CD8-positive, alpha-beta T cell (primary cell): ENCODE measurements at regions of chr2 and their contacts with region 1.

Region 1: GRCh38 chr2:98771721-98772524 is 41.0 kb upstream of the MGAT4A start:
- DNase-seq: peak; percentile 36 to 93 (median 68)
- ATAC-seq: peak; percentile 68
- H3K4me3 ChIP-seq: peak overlapping the region; percentile 39 to 50
- H3K4me3 Mint-ChIP-seq: peak overlapping the region; percentile 87
- H3K27ac ChIP-seq: peak overlapping the region; percentile 79 to 89
- H3K27ac Mint-ChIP-seq: peak overlapping the region; percentile 98
- H3K4me1 ChIP-seq: peaks cover 67% of the 10 kb centered on the region
- H3K4me1 Mint-ChIP-seq: peaks cover 77% of the 10 kb centered on the region
- H3K27me3 ChIP-seq: no peaks in the 10 kb centered on the region
- H3K27me3 Mint-ChIP-seq: no peaks in the 10 kb centered on the region
- CTCF ChIP-seq: no peak

Region 2: GRCh38 chr2:98654699-98655495 is 117.0 kb before region 1 on chr2:
- CTCF ChIA-PET with region 1: interaction called, 12 read pairs
- POLR2A ChIA-PET with region 1: interaction called, 56 read pairs
- intact Hi-C with region 1: loop called in 1 of 2 experiments (anchors 2 kb)
- DNase-seq: peak in 5 of 9 experiments; percentile 43 to 90 (median 75)
- ATAC-seq: peak; percentile 51
- H3K4me3 ChIP-seq: no peak overlapping the region
- H3K4me3 Mint-ChIP-seq: peak overlapping the region; percentile 69
- H3K27ac ChIP-seq: peak overlapping the region; percentile 77 to 80
- H3K27ac Mint-ChIP-seq: peak overlapping the region; percentile 99
- H3K4me1 ChIP-seq: peaks cover 92% of the 10 kb centered on the region
- H3K4me1 Mint-ChIP-seq: peaks cover 84% of the 10 kb centered on the region
- H3K27me3 ChIP-seq: no peaks in the 10 kb centered on the region
- H3K27me3 Mint-ChIP-seq: no peaks in the 10 kb centered on the region
- CTCF ChIP-seq: no peak

Region 3: GRCh38 chr2:98736464-98736889 is 35.4 kb before region 1 on chr2:
- CTCF ChIA-PET with region 1: interaction called, 17 read pairs
- POLR2A ChIA-PET with region 1: interaction called, 112 read pairs
- intact Hi-C with region 1: loop called (anchors 1 kb)
- DNase-seq: peak in 2 of 9 experiments; percentile 32 to 49
- ATAC-seq: peak; percentile 58
- H3K4me3 ChIP-seq: no peak overlapping the region
- H3K4me3 Mint-ChIP-seq: peak overlapping the region; percentile 22
- H3K27ac ChIP-seq: peak overlapping the region in 1 of 2 experiments; percentile 39
- H3K27ac Mint-ChIP-seq: peak overlapping the region; percentile 82
- H3K4me1 ChIP-seq: peaks cover 63% of the 10 kb centered on the region
- H3K4me1 Mint-ChIP-seq: peaks cover 76% of the 10 kb centered on the region
- H3K27me3 ChIP-seq: no peaks in the 10 kb centered on the region
- H3K27me3 Mint-ChIP-seq: no peaks in the 10 kb centered on the region
- CTCF ChIP-seq: no peak

Region 4: GRCh38 chr2:98757904-98758421 is 14.0 kb before region 1 on chr2:
- CTCF ChIA-PET with region 1: interaction called, 5 read pairs
- POLR2A ChIA-PET with region 1: interaction called, 52 read pairs
- intact Hi-C with region 1: loop called in 1 of 2 experiments (anchors 1 kb)
- DNase-seq: peak in 8 of 9 experiments; percentile 22 to 87 (median 70)
- ATAC-seq: peak; percentile 69
- H3K4me3 ChIP-seq: peak overlapping the region; percentile 14 to 32
- H3K4me3 Mint-ChIP-seq: peak overlapping the region; percentile 77
- H3K27ac ChIP-seq: peak overlapping the region; percentile 37 to 66
- H3K27ac Mint-ChIP-seq: peak overlapping the region; percentile 97
- H3K4me1 ChIP-seq: peaks cover 50% of the 10 kb centered on the region
- H3K4me1 Mint-ChIP-seq: peaks cover 58% of the 10 kb centered on the region
- H3K27me3 ChIP-seq: no peaks in the 10 kb centered on the region
- H3K27me3 Mint-ChIP-seq: no peaks in the 10 kb centered on the region
- CTCF ChIP-seq: no peak

Region 5: DNA sequence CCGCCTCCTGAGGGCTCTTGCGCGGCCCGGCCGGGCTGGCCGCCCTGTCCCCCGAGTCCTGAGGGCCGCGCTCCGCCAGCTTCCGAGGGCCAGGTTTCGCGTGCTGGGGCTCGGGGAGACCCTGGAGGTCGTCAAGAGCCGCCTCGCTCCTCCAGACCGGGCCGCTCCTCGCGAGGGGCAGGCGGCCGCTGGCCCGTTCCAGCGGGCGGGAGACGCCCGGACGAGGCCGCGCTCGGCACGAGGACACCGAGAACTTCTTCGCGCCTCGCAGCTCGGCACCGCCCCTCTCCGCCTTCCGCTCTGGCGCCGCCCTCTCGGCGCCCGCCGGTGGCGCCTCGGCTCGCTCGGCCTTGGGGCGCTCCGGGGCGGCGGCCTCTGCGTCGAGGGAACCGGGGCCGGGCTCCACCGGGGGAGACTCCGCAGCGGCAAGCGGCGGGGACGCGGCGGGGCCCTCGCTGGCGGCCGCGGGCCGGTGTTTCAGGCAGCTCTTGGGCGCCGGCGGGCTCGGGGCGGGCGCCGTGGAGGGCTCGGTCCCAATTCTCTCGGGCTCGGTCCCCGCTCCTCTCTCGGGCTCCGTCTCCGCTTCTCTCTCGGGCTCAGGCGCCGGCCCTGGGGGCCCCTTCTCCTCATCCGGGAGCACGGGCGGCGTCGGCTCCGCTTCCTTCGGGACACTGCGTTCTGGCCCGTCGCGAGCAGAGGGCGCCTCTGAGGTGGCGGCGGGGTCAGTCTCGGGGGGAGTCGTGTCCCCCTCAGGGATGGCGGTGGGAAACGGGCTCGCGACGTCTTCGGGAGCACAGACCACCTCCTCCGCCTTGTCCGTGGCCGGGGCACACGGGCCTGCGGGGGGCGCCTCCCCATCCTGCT is 50.6 kb after region 1 on chr2:
- CTCF ChIA-PET with region 1: interaction called, 9 read pairs
- POLR2A ChIA-PET with region 1: interaction called, 27 read pairs
- intact Hi-C with region 1: loop called (anchors 5 kb)
- DNase-seq: peak; percentile 37 to 83 (median 58)
- ATAC-seq: peak; percentile 91
- H3K4me3 ChIP-seq: peak overlapping the region; percentile 50 to 53
- H3K4me3 Mint-ChIP-seq: peak overlapping the region; percentile 58
- H3K27ac ChIP-seq: peak overlapping the region in 1 of 2 experiments; percentile 24
- H3K27ac Mint-ChIP-seq: no peak overlapping the region
- H3K4me1 ChIP-seq: peaks cover under 1% of the 10 kb centered on the region
- H3K4me1 Mint-ChIP-seq: peaks cover 22% of the 10 kb centered on the region
- H3K27me3 ChIP-seq: no peaks in the 10 kb centered on the region
- H3K27me3 Mint-ChIP-seq: no peaks in the 10 kb centered on the region
- CTCF ChIP-seq: peak; percentile 19

Region 6: DNA sequence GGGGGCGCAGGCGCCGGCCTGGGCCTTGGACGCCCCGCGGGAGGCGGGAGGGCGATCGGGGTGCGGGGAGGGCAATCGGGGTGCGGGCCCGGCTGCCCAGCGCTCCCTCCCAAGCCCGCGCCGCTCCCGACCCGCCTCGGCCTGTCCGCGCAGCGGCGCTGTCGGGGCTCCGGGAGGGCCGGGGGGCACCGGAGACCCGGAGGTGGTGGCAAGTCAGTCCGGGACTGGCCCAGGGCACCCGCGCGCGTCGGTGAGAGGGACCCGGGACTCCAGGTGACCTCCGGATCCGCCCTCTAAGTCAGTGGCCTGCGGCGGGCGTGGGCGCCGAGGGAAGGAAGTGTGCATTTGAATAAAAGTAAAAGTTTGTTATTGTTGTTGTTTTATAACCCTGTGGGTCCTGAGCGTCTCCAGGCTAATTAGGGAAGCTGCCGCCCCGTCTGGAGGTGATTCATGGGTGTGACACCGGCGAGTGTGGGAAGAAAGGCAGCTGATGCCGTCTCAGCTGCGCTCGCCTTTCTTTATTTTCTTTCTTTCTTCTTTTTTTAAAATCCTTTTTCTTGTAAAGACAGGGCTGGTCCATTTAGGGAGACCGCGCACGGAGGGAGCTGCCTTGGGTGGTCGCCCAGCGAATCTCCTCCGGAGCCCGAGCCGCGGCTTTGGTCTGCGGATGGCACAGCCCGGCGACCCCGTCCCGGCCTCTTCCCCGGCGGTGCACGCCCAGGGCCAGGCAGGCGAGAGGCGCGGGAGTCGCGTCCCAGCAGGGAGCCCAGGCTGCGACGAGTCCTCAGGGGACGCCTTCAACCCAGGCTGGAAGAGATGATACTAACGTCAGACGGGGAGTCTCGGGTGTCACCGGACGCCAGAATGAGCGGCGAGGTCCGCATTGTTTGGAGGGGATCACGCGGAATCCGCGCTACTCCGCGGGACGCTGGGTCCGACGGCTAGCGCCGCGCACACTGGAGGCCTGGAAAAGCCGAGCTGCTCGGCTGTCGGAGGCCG is 164.7 kb after region 1 on chr2:
- CTCF ChIA-PET with region 1: no interaction called
- POLR2A ChIA-PET with region 1: no interaction called
- intact Hi-C with region 1: no loop called
- DNase-seq: peak in 1 of 9 experiments; percentile 22
- ATAC-seq: peak; percentile 38
- H3K4me3 ChIP-seq: peak overlapping the region; percentile 12 to 34
- H3K4me3 Mint-ChIP-seq: peak overlapping the region; percentile 81
- H3K27ac ChIP-seq: no peak overlapping the region
- H3K27ac Mint-ChIP-seq: no peak overlapping the region
- H3K4me1 ChIP-seq: peaks cover 9% of the 10 kb centered on the region
- H3K4me1 Mint-ChIP-seq: peaks cover 13% of the 10 kb centered on the region
- H3K27me3 ChIP-seq: peaks cover 3 to 9% of the 10 kb centered on the region in 2 experiments
- H3K27me3 Mint-ChIP-seq: peaks cover 52% of the 10 kb centered on the region
- CTCF ChIP-seq: no peak